ENCODE measurements at regions of chr9 and their contacts with region 1.

Region 1: GRCh38 chr9:122350638-122351355 is 20.0 kb upstream of the PTGS1 start:
- DNase-seq: peak; percentile 58 to 79 (median 67)
- H3K4me3 ChIP-seq: no peak overlapping the region
- H3K4me3 Mint-ChIP-seq: no peak overlapping the region
- H3K27ac ChIP-seq: no peak overlapping the region
- H3K27ac Mint-ChIP-seq: no peak overlapping the region
- H3K4me1 ChIP-seq: no peaks in the 10 kb centered on the region
- H3K4me1 Mint-ChIP-seq: peaks cover 0 to 22% (median 6%) of the 10 kb centered on the region in 3 donors
- H3K27me3 ChIP-seq: peaks cover 6% of the 10 kb centered on the region
- H3K27me3 Mint-ChIP-seq: peaks cover 37 to 45% of the 10 kb centered on the region in 2 donors

Region 2: DNA sequence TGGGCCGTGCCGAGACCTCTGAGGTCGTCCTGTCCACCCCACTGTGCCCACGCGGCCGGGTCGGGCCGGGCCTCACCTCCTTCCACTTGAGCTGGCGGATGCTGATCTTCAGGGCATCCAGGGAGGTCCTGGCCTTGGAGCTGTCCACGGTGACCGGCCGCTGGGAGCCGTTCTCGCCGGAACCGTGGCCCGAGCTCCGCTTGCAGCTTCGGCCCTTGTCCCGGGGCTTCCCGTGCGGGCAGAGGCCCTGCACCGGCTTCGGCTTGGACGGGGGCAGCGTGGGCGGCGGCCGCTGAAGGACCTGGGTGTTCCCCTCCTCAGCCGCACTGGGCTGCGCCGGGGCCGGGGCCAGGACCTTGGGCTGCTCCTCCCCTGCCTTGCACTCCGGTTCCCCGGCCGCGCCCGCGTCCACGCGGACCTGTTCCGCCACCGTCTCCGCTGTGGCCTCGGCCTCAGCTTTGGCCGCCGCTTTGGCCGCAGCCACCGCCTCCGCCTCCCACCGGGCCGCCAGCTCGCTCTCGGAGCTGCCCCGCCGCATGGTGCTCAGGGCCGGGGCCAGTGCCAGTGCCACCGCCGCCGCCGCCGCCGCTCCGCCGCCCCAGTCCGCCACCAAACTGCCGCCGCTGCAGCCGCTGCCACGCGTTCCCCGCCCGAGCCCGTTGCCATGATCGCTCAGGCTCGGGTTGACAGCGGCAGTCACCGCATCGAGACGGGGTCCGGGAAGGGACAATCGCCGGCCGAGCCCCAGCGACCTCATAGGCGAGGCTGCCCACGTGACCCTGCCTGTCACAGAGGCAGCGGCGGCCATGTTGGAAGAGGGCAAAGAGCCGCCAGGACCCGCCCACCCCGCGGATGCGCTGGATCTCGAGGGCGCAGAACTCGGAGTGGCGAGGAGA is 257.9 kb before region 1 on chr9 and contains the start of gene TTLL11:
- CTCF ChIA-PET with region 1: interaction called, 71 read pairs
- POLR2A ChIA-PET with region 1: no interaction called
- DNase-seq: peak; percentile 94 to 97 (median 96)
- H3K4me3 ChIP-seq: peak within 1 kb of the TSS; percentile 74
- H3K4me3 Mint-ChIP-seq: peak within 1 kb of the TSS; percentile 88 to 95 (median 93)
- H3K27ac ChIP-seq: no peak within 1 kb of the TSS
- H3K27ac Mint-ChIP-seq: peak within 1 kb of the TSS; percentile 30 to 90 (median 78)
- H3K4me1 ChIP-seq: peaks cover 40% of the 10 kb centered on the region
- H3K4me1 Mint-ChIP-seq: peaks cover 33 to 47% (median 42%) of the 10 kb centered on the region in 3 donors
- H3K27me3 ChIP-seq: no peaks in the 10 kb centered on the region
- H3K27me3 Mint-ChIP-seq: no peaks in the 10 kb centered on the region
- total RNA-seq, gene TTLL11: 4.0 to 4.5 TPM

Region 3: GRCh38 chr9:122099271-122099869 is 251.4 kb before region 1 on chr9:
- CTCF ChIA-PET with region 1: interaction called, 71 read pairs
- POLR2A ChIA-PET with region 1: no interaction called
- DNase-seq: peak; percentile 61 to 85 (median 72)
- H3K4me3 ChIP-seq: no peak overlapping the region
- H3K4me3 Mint-ChIP-seq: peak overlapping the region in 5 of 7 donors; percentile 25 to 61 (median 41)
- H3K27ac ChIP-seq: no peak overlapping the region
- H3K27ac Mint-ChIP-seq: peak overlapping the region in 1 of 8 donors; percentile 24
- H3K4me1 ChIP-seq: peaks cover 13% of the 10 kb centered on the region
- H3K4me1 Mint-ChIP-seq: peaks cover 13 to 17% (median 16%) of the 10 kb centered on the region in 3 donors
- H3K27me3 ChIP-seq: no peaks in the 10 kb centered on the region
- H3K27me3 Mint-ChIP-seq: peaks cover 2 to 6% of the 10 kb centered on the region in 2 donors

Region 4: GRCh38 chr9:122116040-122116439 is 234.8 kb before region 1 on chr9:
- CTCF ChIA-PET with region 1: interaction called, 166 read pairs
- POLR2A ChIA-PET with region 1: interaction called, 7 read pairs
- DNase-seq: no peak
- H3K4me3 ChIP-seq: no peak overlapping the region
- H3K4me3 Mint-ChIP-seq: no peak overlapping the region
- H3K27ac ChIP-seq: no peak overlapping the region
- H3K27ac Mint-ChIP-seq: no peak overlapping the region
- H3K4me1 ChIP-seq: no peaks in the 10 kb centered on the region
- H3K4me1 Mint-ChIP-seq: no peaks in the 10 kb centered on the region
- H3K27me3 ChIP-seq: no peaks in the 10 kb centered on the region
- H3K27me3 Mint-ChIP-seq: peaks cover 5 to 22% of the 10 kb centered on the region in 2 donors

Region 5: DNA sequence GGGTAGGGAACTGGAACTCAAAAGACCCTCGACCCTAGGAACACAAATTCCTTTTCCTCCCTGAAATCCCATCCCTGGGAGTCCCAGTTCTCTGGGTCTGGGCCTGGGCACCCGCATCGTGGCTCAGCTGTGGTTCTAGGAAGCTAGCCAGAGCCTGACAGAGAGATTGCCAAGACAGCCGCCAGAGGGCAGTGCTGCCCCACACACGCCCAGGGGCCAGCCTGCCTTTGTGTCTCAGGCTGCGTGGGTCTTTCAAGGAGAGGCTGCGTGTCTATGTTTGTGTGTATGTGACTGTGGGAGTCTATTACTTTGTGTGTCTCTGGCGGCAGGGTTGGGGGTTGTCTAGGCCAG is 225.7 kb before region 1 on chr9:
- CTCF ChIA-PET with region 1: interaction called, 166 read pairs
- POLR2A ChIA-PET with region 1: no interaction called
- DNase-seq: peak; percentile 60 to 80 (median 66)
- H3K4me3 ChIP-seq: no peak overlapping the region
- H3K4me3 Mint-ChIP-seq: peak overlapping the region in 5 of 7 donors; percentile 6 to 67 (median 65)
- H3K27ac ChIP-seq: no peak overlapping the region
- H3K27ac Mint-ChIP-seq: peak overlapping the region in 2 of 8 donors; percentile 2 to 77
- H3K4me1 ChIP-seq: peaks cover 5% of the 10 kb centered on the region
- H3K4me1 Mint-ChIP-seq: peaks cover 21 to 41% (median 22%) of the 10 kb centered on the region in 3 donors
- H3K27me3 ChIP-seq: peaks cover 15% of the 10 kb centered on the region
- H3K27me3 Mint-ChIP-seq: peaks cover 30 to 44% of the 10 kb centered on the region in 2 donors

Region 6: GRCh38 chr9:122338994-122339393 is 11.8 kb before region 1 on chr9:
- CTCF ChIA-PET with region 1: interaction called, 13 read pairs
- POLR2A ChIA-PET with region 1: no interaction called
- DNase-seq: no peak
- H3K4me3 ChIP-seq: no peak overlapping the region
- H3K4me3 Mint-ChIP-seq: no peak overlapping the region
- H3K27ac ChIP-seq: no peak overlapping the region
- H3K27ac Mint-ChIP-seq: peak overlapping the region in 1 of 8 donors; percentile 72
- H3K4me1 ChIP-seq: no peaks in the 10 kb centered on the region
- H3K4me1 Mint-ChIP-seq: no peaks in the 10 kb centered on the region
- H3K27me3 ChIP-seq: no peaks in the 10 kb centered on the region
- H3K27me3 Mint-ChIP-seq: peaks cover 3 to 5% of the 10 kb centered on the region in 2 donors

Region 7: GRCh38 chr9:122360891-122361290 is 10.1 kb after region 1 on chr9:
- CTCF ChIA-PET with region 1: interaction called, 10 read pairs
- POLR2A ChIA-PET with region 1: no interaction called
- DNase-seq: no peak
- H3K4me3 ChIP-seq: no peak overlapping the region
- H3K4me3 Mint-ChIP-seq: no peak overlapping the region
- H3K27ac ChIP-seq: no peak overlapping the region
- H3K27ac Mint-ChIP-seq: no peak overlapping the region
- H3K4me1 ChIP-seq: no peaks in the 10 kb centered on the region
- H3K4me1 Mint-ChIP-seq: no peaks in the 10 kb centered on the region
- H3K27me3 ChIP-seq: no peaks in the 10 kb centered on the region
- H3K27me3 Mint-ChIP-seq: peaks cover 12 to 14% of the 10 kb centered on the region in 2 donors

Region 8: GRCh38 chr9:122477346-122477745 is 126.5 kb after region 1 on chr9:
- CTCF ChIA-PET with region 1: no interaction called
- POLR2A ChIA-PET with region 1: no interaction called
- DNase-seq: no peak
- H3K4me3 ChIP-seq: no peak overlapping the region
- H3K4me3 Mint-ChIP-seq: no peak overlapping the region
- H3K27ac ChIP-seq: no peak overlapping the region
- H3K27ac Mint-ChIP-seq: no peak overlapping the region
- H3K4me1 ChIP-seq: no peaks in the 10 kb centered on the region
- H3K4me1 Mint-ChIP-seq: no peaks in the 10 kb centered on the region
- H3K27me3 ChIP-seq: no peaks in the 10 kb centered on the region
- H3K27me3 Mint-ChIP-seq: peaks cover 6 to 26% of the 10 kb centered on the region in 2 donors

Measured in CD8-positive, alpha-beta memory T cell (primary cell).